Pancreas (tissue), 10 donors: ENCODE measurements at regions of chr15 and their contacts with region 1.

Region 1: GRCh38 chr15:92714477-92715401 is 59.2 kb upstream of the FAM174B start:
- DNase-seq: peak; percentile 45 to 85 (median 68)
- ATAC-seq: peak; percentile 90 to 98 (median 96)
- H3K4me3 ChIP-seq: peak overlapping the region; percentile 31 to 50 (median 47)
- H3K27ac ChIP-seq: peak overlapping the region in 3 of 4 donors; percentile 7 to 19 (median 18)
- H3K4me1 ChIP-seq: no peaks in the 10 kb centered on the region
- H3K27me3 ChIP-seq: no peaks in the 10 kb centered on the region
- CTCF ChIP-seq: peak; percentile 50 to 86 (median 62)

Region 2: GRCh38 chr15:92277776-92278175 is 437.0 kb before region 1 on chr15:
- intact Hi-C with region 1: loop called in 1 of 3 experiments (anchors 10 kb)
- DNase-seq: peak in 1 of 6 donors; percentile 11
- ATAC-seq: peak in 3 of 4 donors; percentile 55 to 61 (median 55)
- H3K4me3 ChIP-seq: no peak overlapping the region
- H3K27ac ChIP-seq: no peak overlapping the region
- H3K4me1 ChIP-seq: no peaks in the 10 kb centered on the region
- H3K27me3 ChIP-seq: no peaks in the 10 kb centered on the region
- CTCF ChIP-seq: no peak

Region 3: GRCh38 chr15:92903941-92904831 is 189.4 kb after region 1 on chr15:
- intact Hi-C with region 1: no loop called
- DNase-seq: peak; percentile 98 to 100 (median 99)
- ATAC-seq: peak; percentile 81 to 89 (median 85)
- H3K4me3 ChIP-seq: peak overlapping the region; percentile 18 to 58 (median 48)
- H3K27ac ChIP-seq: peak overlapping the region; percentile 91 to 99 (median 96)
- H3K4me1 ChIP-seq: peaks cover 26 to 45% (median 39%) of the 10 kb centered on the region in 3 donors
- H3K27me3 ChIP-seq: no peaks in the 10 kb centered on the region
- CTCF ChIP-seq: no peak